ENCODE measurements at regions of chr17 and their contacts with region 1.

Region 1: DNA sequence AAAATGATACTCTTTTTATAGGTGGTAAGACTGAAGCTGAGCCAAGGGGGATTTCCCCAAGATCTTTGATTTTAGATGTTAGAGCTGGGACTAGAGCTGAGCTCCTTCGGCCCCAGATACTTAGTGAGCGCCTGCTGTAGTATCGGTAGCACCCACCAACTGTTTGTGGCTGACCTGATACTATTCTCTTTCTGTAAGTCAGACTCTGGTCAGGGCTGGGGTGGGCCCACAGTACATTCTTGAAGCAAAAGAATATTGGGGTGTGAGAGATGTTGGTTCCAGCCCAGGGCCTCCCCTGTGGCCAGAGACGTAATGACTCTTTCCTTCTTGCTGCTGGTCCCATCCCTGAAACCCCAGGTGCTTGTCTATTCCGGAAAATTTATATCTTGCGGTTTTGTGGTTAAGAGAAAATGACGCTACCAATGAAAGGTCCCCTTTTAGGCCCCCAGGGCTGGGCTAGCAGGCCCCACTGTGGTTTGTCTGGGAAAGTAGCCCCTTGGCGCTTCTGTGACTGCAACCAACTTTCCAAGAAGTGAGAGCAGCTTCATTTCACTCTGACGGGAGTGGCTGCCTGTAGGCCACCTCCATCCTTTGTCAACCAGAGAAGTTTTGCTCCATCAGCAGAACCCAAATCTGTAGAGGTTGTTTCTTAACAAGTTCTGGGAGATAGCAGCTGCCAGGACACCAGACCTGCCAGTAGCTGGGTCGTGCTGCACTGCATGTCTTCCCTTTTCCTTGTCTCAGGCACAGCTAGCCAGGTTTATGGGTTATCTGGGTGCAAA is 86.4 kb upstream of the LGALS9 start:
- DNase-seq: peak; percentile 92
- ATAC-seq: peak; percentile 80
- H3K4me3 Mint-ChIP-seq: peak overlapping the region; percentile 53
- H3K27ac Mint-ChIP-seq: peak overlapping the region; percentile 80
- H3K4me1 Mint-ChIP-seq: peaks cover 78% of the 10 kb centered on the region
- H3K27me3 Mint-ChIP-seq: no peaks in the 10 kb centered on the region

Region 2: DNA sequence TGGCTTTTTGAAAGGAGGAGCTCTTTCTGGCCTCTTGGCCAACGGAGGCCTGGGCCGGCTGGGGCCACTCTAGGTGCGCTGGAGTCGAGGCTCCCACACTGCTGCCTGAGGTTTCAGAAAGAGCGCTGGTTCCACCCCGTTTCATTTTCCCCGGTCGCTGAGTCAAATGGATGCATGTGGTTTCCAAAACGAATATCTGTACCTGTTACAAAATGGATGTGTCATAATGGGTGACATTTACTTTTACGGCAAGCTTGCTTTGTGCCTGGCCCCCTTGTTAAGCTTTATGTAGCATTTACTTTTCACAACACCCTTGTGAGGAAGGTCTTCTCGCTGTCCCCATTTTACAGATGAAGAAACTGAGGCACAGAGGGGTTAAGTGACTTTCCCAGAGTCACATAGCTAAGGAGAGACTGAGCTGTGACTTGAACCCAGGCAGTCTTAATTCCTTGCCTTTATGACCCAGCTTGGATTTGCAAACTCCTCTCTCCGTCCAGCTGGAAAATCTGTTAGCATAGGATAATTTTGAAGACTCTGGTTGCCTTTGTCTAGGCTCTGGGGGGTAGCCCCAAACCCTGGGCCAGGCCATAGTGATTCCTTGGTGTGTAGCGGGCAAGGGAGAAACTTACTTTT is 77.7 kb before region 1 on chr17:
- CTCF ChIA-PET with region 1: interaction called, 15 read pairs
- DNase-seq: peak; percentile 91
- ATAC-seq: peak; percentile 86
- H3K4me3 Mint-ChIP-seq: peak overlapping the region; percentile 63
- H3K27ac Mint-ChIP-seq: peak overlapping the region; percentile 96
- H3K4me1 Mint-ChIP-seq: peaks cover 90% of the 10 kb centered on the region
- H3K27me3 Mint-ChIP-seq: no peaks in the 10 kb centered on the region

Region 3: DNA sequence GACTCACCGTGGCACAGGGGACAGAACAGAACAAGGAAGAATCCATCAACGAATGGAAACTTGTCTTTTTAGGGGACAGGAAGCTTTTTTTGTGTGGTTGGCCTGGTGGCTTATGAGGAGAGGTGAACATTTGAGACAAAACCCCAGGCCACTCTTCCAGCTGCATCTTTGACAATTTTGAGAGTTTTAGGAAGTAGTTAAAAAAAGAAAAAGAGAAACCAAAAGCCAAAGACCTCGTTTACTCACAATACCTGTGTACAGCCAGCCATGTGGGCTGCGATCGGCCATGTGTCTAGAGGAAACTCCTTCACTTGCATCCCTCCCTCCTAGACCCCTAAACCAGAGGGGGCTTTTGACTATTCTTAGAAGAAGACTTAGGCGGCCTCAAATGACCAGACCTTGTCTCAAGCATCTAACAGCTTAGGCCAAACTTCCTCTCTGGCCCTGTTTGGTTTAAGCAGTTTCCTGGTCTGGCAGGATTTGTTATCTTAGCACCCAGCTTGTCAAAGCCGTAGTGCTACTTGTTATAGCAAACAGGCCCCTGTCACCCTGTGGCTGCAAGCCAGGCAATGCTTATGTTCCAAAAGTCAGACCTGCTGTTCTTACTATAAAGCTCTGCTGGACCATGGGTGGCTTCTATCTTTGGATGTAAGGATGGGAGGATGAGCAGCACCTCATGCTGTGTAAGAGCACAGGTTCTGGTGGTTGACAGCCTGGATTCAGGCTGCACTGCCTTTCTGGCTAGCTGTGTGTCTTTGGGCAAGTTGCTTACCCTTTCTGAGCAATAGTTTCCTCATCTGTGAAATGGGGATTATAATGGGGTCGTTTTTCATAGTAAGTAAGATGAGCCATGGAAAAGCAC is 70.6 kb before region 1 on chr17:
- CTCF ChIA-PET with region 1: interaction called, 16 read pairs
- DNase-seq: peak; percentile 92
- ATAC-seq: peak; percentile 37
- H3K4me3 Mint-ChIP-seq: peak overlapping the region; percentile 68
- H3K27ac Mint-ChIP-seq: peak overlapping the region; percentile 91
- H3K4me1 Mint-ChIP-seq: peaks cover 92% of the 10 kb centered on the region
- H3K27me3 Mint-ChIP-seq: no peaks in the 10 kb centered on the region

Region 4: GRCh38 chr17:27532269-27533263 is 12.0 kb before region 1 on chr17:
- CTCF ChIA-PET with region 1: no interaction called
- DNase-seq: no peak
- ATAC-seq: no peak
- H3K4me3 Mint-ChIP-seq: no peak overlapping the region
- H3K27ac Mint-ChIP-seq: no peak overlapping the region
- H3K4me1 Mint-ChIP-seq: peaks cover 62% of the 10 kb centered on the region
- H3K27me3 Mint-ChIP-seq: no peaks in the 10 kb centered on the region

Measured in activated CD8-positive, alpha-beta memory T cell treated with anti-CD3 and anti-CD28 coated beads, Interleukin-2, amount 10 ng/mL, durations not matched to agents 7 days and 5 days (primary cell).